ENCODE measurements at regions of chr5 and their contacts with region 1.

Region 1: GRCh38 chr5:7261049-7261448 is 134.9 kb upstream of the ADCY2 start:
- DNase-seq: no peak
- H3K4me3 Mint-ChIP-seq: no peak overlapping the region
- H3K27ac Mint-ChIP-seq: no peak overlapping the region
- H3K4me1 Mint-ChIP-seq: no peaks in the 10 kb centered on the region
- H3K27me3 Mint-ChIP-seq: peaks cover 2% of the 10 kb centered on the region

Region 2: DNA sequence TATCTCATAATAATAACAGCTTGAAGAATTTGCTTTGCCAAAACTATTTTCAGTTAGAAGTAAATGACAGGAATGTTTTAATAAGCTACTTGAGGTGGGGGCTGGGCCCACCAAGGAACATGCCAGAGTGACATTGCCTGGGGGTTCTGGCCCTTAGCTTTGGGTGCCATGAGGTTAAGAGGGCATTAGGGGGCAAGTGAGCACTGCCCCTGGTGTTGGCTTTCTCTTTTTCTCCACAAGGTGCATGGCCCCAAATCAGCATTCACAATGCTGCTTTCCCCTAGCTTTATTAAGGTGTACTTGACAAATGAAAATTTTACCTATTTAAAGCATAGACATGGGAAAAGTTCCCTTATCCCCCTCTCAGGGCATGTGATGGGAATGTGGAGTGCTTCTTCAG is 242.4 kb before region 1 on chr5:
- CTCF ChIA-PET with region 1: no interaction called
- intact Hi-C with region 1: no loop called
- DNase-seq: no peak
- H3K4me3 Mint-ChIP-seq: no peak overlapping the region
- H3K27ac Mint-ChIP-seq: no peak overlapping the region
- H3K4me1 Mint-ChIP-seq: no peaks in the 10 kb centered on the region
- H3K27me3 Mint-ChIP-seq: no peaks in the 10 kb centered on the region

Region 3: GRCh38 chr5:7745882-7746610 is 485.0 kb after region 1 on chr5:
- CTCF ChIA-PET with region 1: interaction called, 7 read pairs
- intact Hi-C with region 1: loop called (anchors 2 kb)
- DNase-seq: peak; percentile 69
- H3K4me3 Mint-ChIP-seq: no peak overlapping the region
- H3K27ac Mint-ChIP-seq: no peak overlapping the region
- H3K4me1 Mint-ChIP-seq: no peaks in the 10 kb centered on the region
- H3K27me3 Mint-ChIP-seq: peaks cover 6% of the 10 kb centered on the region

Region 4: GRCh38 chr5:7815892-7816534 is 555.0 kb after region 1 on chr5:
- CTCF ChIA-PET with region 1: interaction called, 3 read pairs
- intact Hi-C with region 1: loop called (anchors 5 kb)
- DNase-seq: peak; percentile 75
- H3K4me3 Mint-ChIP-seq: no peak overlapping the region
- H3K27ac Mint-ChIP-seq: no peak overlapping the region
- H3K4me1 Mint-ChIP-seq: peaks cover 4% of the 10 kb centered on the region
- H3K27me3 Mint-ChIP-seq: peaks cover 49% of the 10 kb centered on the region

Region 5: GRCh38 chr5:7856855-7857254 is 595.8 kb after region 1 on chr5:
- CTCF ChIA-PET with region 1: no interaction called
- intact Hi-C with region 1: loop called (anchors 2 kb)
- DNase-seq: peak; percentile 55
- H3K4me3 Mint-ChIP-seq: no peak overlapping the region
- H3K27ac Mint-ChIP-seq: no peak overlapping the region
- H3K4me1 Mint-ChIP-seq: peaks cover 23% of the 10 kb centered on the region
- H3K27me3 Mint-ChIP-seq: no peaks in the 10 kb centered on the region

Measured in activated naive CD4-positive, alpha-beta T cell treated with anti-CD3 and anti-CD28 coated beads for 36 hours (primary cell).